Activated naive CD4-positive, alpha-beta T cell treated with anti-CD3 and anti-CD28 coated beads for 36 hours (primary cell): ENCODE measurements at regions of chr10 and their contacts with region 1.

Region 1: DNA sequence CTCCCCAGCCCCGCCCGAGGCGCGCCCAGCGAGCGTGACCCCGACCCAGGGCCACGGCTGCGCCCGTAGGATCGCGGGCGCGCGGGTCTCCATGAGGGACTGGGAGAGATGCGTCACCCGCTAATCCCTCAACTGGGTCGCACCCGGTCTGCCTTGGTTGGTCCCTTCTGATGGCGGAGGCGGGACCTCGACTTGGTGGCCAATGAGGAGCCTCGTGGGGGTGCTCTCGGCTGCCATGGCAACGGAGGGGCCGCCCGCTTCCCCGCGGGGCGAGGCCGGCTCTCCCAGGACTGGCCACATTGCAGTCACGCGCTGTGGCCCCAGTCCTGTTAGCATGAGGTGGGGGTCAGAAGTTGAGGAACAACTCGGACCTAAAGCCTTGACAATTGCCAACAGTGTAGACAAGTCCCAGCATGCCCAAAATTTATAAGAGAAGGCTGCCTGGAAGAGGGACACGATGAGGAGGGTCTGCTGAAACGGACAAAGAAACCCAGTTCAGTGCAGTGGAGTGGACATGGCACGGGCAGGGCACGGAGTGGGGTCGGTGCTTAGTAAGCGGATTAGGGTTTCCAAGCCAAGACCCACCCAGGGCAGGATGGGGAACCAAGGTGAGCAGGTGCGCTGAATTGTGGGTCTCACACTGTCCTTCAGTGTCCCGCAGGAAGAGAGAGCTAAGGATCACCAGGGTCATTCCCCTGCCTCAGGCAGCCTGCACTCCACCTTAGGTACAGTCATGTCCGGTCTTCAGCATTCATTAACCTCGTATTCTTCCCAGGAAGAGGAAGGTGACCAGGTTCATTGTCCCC is 24.4 kb downstream of the DDIT4 start:
- DNase-seq: peak; percentile 98
- H3K4me3 Mint-ChIP-seq: peak overlapping the region; percentile 89
- H3K27ac Mint-ChIP-seq: peak overlapping the region; percentile 100
- H3K4me1 Mint-ChIP-seq: peaks cover 62% of the 10 kb centered on the region
- H3K27me3 Mint-ChIP-seq: no peaks in the 10 kb centered on the region

Region 2: GRCh38 chr10:71766702-71767419 is 531.3 kb before region 1 on chr10:
- CTCF ChIA-PET with region 1: no interaction called
- intact Hi-C with region 1: loop called (anchors 5 kb)
- DNase-seq: no peak
- H3K4me3 Mint-ChIP-seq: peak overlapping the region; percentile 52
- H3K27ac Mint-ChIP-seq: peak overlapping the region; percentile 98
- H3K4me1 Mint-ChIP-seq: peaks cover 89% of the 10 kb centered on the region
- H3K27me3 Mint-ChIP-seq: no peaks in the 10 kb centered on the region

Region 3: GRCh38 chr10:72016608-72017312 is 281.4 kb before region 1 on chr10:
- CTCF ChIA-PET with region 1: no interaction called
- intact Hi-C with region 1: no loop called
- DNase-seq: no peak
- H3K4me3 Mint-ChIP-seq: no peak overlapping the region
- H3K27ac Mint-ChIP-seq: no peak overlapping the region
- H3K4me1 Mint-ChIP-seq: no peaks in the 10 kb centered on the region
- H3K27me3 Mint-ChIP-seq: no peaks in the 10 kb centered on the region

Region 4: GRCh38 chr10:72248468-72249151 is 49.6 kb before region 1 on chr10:
- CTCF ChIA-PET with region 1: interaction called, 4 read pairs
- intact Hi-C with region 1: loop called (anchors 1 kb)
- DNase-seq: peak; percentile 87
- H3K4me3 Mint-ChIP-seq: peak overlapping the region; percentile 75
- H3K27ac Mint-ChIP-seq: peak overlapping the region; percentile 92
- H3K4me1 Mint-ChIP-seq: peaks cover 78% of the 10 kb centered on the region
- H3K27me3 Mint-ChIP-seq: no peaks in the 10 kb centered on the region

Region 5: DNA sequence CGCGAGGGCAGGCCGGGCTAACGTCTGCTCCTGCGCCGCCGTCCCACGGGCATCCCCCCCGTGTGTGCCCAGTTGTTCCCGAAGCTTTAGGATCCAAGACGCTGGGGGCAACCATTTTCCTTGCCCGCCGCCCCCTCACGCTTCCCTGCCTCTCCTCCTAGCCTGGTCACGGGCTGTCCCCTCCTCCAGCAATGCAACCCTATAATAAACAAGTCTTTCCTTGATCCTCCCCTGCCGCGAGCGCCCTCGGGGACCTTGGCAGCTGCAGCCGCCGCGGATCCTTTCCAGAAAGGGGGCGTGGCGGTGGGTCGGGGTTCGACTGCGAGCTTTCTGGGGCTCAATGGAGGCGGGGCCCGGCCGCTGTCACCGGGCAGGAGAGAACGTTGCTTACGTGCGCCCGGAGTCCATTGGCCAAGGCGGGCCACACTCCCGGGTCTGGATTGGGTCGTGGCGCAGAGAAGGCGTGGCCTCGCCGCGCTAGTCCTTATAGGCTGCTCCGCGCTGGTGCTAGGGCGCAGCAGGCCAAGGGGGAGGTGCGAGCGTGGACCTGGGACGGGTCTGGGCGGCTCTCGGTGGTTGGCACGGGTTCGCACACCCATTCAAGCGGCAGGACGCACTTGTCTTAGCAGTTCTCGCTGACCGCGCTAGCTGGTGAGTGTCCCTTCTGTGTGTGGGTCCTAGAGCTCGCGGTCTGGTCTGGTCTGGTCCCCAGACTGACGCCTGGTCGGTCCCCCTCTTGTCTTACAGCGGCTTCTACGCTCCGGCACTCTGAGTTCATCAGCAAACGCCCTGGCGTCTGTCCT is 24.6 kb before region 1 on chr10 and contains the start of gene DDIT4:
- CTCF ChIA-PET with region 1: interaction called, 26 read pairs
- intact Hi-C with region 1: loop called (anchors 1 kb)
- DNase-seq: peak; percentile 99
- H3K4me3 Mint-ChIP-seq: peak within 1 kb of the TSS; percentile 96
- H3K27ac Mint-ChIP-seq: peak within 1 kb of the TSS; percentile 98
- H3K4me1 Mint-ChIP-seq: peaks cover 34% of the 10 kb centered on the region
- H3K27me3 Mint-ChIP-seq: no peaks in the 10 kb centered on the region
- total RNA-seq, gene DDIT4: 684 to 689 TPM

Region 6: GRCh38 chr10:72308320-72308987 is 10.3 kb after region 1 on chr10:
- CTCF ChIA-PET with region 1: interaction called, 10 read pairs
- intact Hi-C with region 1: loop called (anchors 1 kb)
- DNase-seq: peak; percentile 73
- H3K4me3 Mint-ChIP-seq: no peak overlapping the region
- H3K27ac Mint-ChIP-seq: peak overlapping the region; percentile 87
- H3K4me1 Mint-ChIP-seq: peaks cover 74% of the 10 kb centered on the region
- H3K27me3 Mint-ChIP-seq: no peaks in the 10 kb centered on the region